OCI-LY7 (cell line): ENCODE measurements at regions of chr6 and their contacts with region 1.

Region 1: GRCh38 chr6:27479319-27480182 is 6.6 kb upstream of the ZNF184 start:
- DNase-seq: peak; percentile 85
- H3K4me3 ChIP-seq: peak overlapping the region; percentile 73
- H3K27ac ChIP-seq: peak overlapping the region; percentile 79
- H3K4me1 ChIP-seq: peaks cover 15% of the 10 kb centered on the region
- CTCF ChIP-seq: no peak

Region 2: DNA sequence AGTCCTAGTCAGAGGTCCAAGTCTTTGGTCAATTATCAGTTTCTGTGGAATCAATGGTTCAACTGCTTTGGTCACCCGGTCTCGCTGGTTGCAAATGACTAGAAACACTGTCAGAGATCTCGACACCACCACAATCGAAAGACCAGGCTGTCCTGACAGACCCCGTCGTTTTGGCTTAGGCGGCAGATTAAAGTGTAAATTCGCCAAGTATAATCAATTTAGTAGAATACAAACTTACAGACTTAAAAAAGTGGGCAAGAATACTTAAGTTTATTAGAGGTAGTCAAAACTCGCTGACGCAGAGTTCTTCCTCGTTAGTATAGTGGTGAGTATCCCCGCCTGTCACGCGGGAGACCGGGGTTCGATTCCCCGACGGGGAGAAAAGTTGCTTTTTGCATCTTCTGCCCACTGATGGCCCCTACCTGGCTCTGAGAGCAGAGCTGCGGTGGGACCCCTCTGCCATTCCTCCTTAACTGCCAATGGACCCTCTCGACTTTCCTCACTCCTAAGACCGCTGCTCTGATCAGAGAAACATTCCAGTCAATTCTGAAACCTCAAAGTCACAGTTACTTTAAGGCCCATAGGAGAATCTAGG is 24.0 kb after region 1 on chr6:
- CTCF ChIA-PET with region 1: no interaction called
- POLR2A ChIA-PET with region 1: interaction called, 8 read pairs
- intact Hi-C with region 1: loop called (anchors 1 kb)
- DNase-seq: peak; percentile 74
- H3K4me3 ChIP-seq: peak overlapping the region; percentile 74
- H3K27ac ChIP-seq: peak overlapping the region; percentile 22
- H3K4me1 ChIP-seq: peaks cover 12% of the 10 kb centered on the region
- CTCF ChIP-seq: no peak

Region 3: GRCh38 chr6:27687154-27688013 is 207.8 kb after region 1 on chr6:
- CTCF ChIA-PET with region 1: no interaction called
- POLR2A ChIA-PET with region 1: no interaction called
- intact Hi-C with region 1: loop called (anchors 5 kb)
- DNase-seq: peak; percentile 87
- H3K4me3 ChIP-seq: peak overlapping the region; percentile 67
- H3K27ac ChIP-seq: peak overlapping the region; percentile 41
- H3K4me1 ChIP-seq: no peaks in the 10 kb centered on the region
- CTCF ChIP-seq: peak; percentile 83

Region 4: GRCh38 chr6:27795697-27796494 is 316.3 kb after region 1 on chr6:
- CTCF ChIA-PET with region 1: no interaction called
- POLR2A ChIA-PET with region 1: no interaction called
- intact Hi-C with region 1: loop called (anchors 5 kb)
- DNase-seq: peak; percentile 88
- H3K4me3 ChIP-seq: peak overlapping the region; percentile 33
- H3K27ac ChIP-seq: peak overlapping the region; percentile 32
- H3K4me1 ChIP-seq: peaks cover 33% of the 10 kb centered on the region
- CTCF ChIP-seq: peak; percentile 88